AG04450 (cell line): ENCODE measurements at regions of chr6 and their contacts with region 1.

Region 1: DNA sequence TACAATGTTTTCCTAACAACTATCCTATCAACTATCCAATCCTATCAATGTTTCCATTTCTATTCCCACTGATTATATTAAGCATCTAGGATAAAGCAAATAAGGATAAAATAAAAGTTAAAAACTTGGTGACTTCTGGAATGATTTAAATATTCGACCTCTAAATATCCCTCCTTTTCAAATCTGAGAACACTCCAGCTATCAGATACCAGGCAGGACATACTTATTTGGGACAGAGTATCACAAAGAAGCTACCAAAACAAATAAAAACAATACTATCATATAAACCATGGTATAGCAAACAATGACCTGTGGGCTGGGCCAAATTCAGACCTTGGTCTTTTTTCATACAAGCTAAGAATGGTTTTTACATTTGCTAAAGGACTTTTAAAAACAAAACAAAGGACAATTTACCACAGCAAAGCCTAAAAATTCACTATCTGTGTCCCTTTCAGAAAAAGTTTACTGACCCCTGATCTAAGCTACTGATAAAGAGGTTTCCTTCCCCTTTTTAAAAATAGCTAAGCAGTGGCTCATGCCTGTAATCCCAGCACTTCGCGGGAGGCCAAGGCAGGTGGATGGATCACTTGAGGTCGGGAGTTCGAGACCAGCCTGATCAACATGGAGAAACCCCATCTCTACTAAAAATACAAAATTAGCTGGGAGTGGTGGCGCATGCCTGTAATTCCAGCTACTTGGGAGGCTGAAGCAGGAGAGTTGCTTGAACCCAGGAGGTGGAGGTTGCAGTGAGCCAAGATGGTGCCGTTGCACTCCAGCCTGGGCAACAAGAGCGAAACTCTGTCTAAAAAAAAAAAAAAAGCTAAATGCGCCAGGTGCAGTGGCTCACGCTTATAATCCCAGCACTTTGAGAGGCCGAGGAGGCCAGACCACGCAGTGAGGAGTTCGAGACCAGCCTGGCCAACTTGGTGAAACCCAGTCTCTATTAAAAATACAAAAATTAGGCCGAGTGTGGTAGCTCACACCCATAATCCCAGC is 6.0 kb downstream of the NUP153 start:
- DNase-seq: no peak
- H3K4me3 ChIP-seq: no peak overlapping the region
- H3K27ac ChIP-seq: no peak overlapping the region
- H3K27me3 ChIP-seq: no peaks in the 10 kb centered on the region
- CTCF ChIP-seq: no peak

Region 2: DNA sequence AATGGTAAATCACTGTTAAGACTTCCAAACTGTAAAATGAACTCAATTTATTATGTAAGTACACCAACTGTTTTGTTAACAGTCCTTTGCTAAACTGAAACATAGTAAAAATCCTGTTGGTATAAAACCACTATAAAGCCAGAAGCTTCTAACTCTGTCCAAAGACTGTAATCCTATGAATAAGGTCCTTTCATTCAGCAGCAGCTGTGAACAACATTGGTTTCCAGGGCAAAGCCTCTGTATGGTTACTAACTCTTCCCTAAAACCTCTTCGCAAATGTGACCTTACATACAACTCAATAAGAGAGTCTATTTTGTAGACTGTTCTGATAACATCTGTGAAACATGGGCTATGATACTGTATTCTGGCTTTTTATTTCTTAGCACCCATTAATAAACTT is 34.1 kb before region 1 on chr6:
- CTCF ChIA-PET with region 1: no interaction called
- POLR2A ChIA-PET with region 1: no interaction called
- DNase-seq: no peak
- H3K4me3 ChIP-seq: no peak overlapping the region
- H3K27ac ChIP-seq: no peak overlapping the region
- H3K27me3 ChIP-seq: no peaks in the 10 kb centered on the region
- CTCF ChIP-seq: no peak

Region 3: DNA sequence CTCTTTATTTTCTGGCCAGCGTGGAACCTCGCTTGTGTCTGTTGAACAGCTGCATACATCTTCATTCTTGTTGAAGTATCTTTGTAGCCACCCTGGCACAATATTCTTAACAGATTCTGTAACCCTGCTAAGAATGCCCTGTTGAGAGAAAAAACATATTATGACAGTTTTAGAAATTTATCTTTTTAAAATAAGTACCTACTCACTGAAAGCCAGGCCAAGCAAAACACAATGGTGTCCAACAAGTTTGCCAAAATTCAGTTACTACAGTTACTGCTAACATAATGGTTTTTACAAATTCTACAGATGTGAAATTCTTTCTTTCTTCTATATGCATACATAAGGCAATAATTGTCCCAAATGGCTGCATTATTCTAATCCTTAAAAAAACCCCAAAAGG is 12.2 kb before region 1 on chr6:
- CTCF ChIA-PET with region 1: interaction called, 10 read pairs
- POLR2A ChIA-PET with region 1: interaction called, 6 read pairs
- DNase-seq: no peak
- H3K4me3 ChIP-seq: no peak overlapping the region
- H3K27ac ChIP-seq: no peak overlapping the region
- H3K27me3 ChIP-seq: no peaks in the 10 kb centered on the region
- CTCF ChIP-seq: no peak